Left colon (tissue), 2 donors: ENCODE measurements at regions of chr1 and their contacts with region 1.

Region 1: GRCh38 chr1:27284425-27285273 is 37.3 kb upstream of the TMEM222 start:
- DNase-seq: peak; percentile 72 to 97
- ATAC-seq: peak; percentile 93

Region 2: GRCh38 chr1:27031235-27032118 is 253.2 kb before region 1 on chr1:
- intact Hi-C with region 1: no loop called
- DNase-seq: peak; percentile 87 to 92
- ATAC-seq: peak; percentile 89

Region 3: GRCh38 chr1:27102707-27103491 is 181.8 kb before region 1 on chr1:
- intact Hi-C with region 1: loop called (anchors 2 to 5 kb)
- DNase-seq: peak; percentile 18 to 81
- ATAC-seq: peak; percentile 64

Region 4: GRCh38 chr1:27192039-27192529 is 92.6 kb before region 1 on chr1:
- intact Hi-C with region 1: loop called in 1 of 2 experiments (anchors 5 kb)
- DNase-seq: peak; percentile 58 to 83
- ATAC-seq: peak; percentile 91

Region 5: GRCh38 chr1:27218736-27219135 is 65.9 kb before region 1 on chr1:
- intact Hi-C with region 1: no loop called
- DNase-seq: no peak
- ATAC-seq: no peak

Region 6: DNA sequence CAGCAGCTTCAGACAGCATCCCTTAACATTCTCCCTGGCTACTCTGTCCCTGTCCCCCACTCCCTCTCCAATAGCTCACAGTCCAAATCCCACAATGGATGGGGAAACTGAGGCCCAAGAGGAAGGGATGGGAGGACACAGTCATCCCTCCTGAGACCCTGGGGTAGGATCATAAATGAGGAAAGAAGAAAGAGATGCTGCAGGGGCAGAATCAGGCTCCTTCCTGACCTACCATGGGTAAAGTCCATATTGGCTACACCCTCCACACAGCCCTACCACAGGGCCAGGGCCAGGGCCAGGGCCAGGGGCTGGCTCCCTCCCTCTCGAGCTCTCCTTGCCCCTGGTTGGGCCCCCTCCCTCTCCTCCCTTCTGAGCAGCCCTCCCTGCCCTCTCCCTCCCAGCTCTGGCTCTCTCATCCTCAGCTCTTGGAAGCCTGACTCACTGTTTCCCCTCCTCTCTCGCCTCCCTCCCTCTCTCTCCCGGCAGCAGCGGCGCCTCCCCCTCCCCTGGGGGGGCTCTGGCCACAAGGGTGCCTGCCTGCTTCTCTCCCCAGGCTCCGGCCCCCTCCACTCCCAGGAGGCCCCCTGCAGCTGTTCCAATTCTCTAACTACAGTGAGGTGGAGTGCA is 314.4 kb after region 1 on chr1:
- intact Hi-C with region 1: no loop called
- DNase-seq: peak in 1 of 2 donors; percentile 66
- ATAC-seq: peak; percentile 13